ENCODE measurements at regions of chr2 and their contacts with region 1.

Region 1: DNA sequence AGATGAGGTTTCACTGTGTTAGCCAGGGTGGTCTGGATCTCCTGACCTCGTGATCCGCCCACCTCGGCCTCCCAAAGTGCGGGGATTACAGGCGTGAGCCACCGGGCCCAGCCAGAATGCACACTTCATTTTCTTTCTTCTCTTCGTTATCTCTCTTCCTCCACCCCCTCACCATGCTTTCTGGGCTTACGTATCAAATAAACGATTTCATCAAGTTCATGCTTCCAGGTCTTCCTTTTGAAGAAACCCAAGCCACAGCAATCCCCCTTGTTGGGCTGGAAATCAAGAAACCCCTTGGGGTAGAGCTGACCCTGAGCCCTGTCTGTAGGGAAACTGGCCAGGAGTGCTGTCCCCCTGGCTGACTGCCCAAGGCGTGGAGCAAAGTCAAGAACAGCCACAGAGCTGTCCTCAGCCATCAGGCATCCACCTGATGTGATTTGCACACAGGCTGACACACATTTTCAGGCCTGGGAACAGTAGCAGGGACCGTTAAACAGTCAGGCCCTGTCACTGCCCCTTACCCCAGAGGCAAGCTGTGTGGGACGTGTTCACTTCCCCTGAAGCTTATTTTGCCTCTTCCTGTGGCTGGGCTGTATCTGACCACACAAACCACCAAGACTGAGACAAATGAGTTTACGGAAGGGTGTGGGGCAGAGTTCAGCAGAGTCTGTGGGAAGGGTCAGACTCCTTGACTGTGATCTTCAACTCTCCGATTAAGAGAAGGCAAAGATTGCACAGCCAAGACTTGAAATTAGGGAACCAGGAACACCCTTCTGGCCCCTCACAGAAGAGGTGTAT is 15.1 kb upstream of the NMUR1 start:
- DNase-seq: peak; percentile 89
- CTCF ChIP-seq: no peak

Region 2: DNA sequence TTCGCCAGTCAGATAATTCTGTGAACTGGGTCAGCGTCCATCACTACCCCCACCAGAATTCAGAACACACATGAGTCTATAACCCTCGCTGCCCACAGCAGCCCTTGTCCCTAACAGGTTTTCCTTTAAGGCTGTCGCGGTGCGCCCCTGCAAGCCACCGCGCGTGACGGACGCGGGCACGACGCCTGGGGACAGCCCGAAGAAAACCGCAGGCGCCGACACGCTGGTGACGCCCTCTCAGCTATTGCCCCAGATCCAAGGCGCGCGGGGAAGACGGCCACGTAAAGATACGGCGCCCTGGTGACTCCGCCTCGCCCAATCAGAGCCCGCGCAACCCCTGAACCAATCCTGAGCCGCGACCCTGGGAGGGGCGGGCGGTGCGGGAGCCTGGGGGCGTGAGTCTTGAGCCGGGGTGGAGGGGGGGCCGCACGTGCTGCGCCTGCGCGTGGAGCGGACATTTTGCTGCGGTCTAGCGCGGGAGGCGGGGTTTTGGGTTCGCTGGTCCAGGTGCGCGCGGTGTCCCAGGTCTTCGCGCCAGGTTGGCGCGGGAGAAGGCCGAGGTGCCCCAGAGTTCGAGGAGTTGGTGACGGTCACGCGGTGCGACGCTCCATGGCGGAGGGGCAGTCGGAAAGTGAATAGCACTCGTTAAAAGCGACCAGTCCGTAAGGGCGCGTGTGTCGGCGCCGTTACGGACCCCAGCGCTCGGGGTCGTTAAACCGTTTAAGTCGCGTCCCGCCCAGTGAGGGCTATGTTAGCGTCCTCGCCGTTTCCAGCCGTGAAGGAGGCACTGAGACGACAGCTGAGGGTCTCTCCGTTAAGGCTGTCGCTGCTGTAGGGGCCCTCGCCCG is 31.0 kb before region 1 on chr2:
- CTCF ChIA-PET with region 1: interaction called, 15 read pairs
- POLR2A ChIA-PET with region 1: no interaction called
- DNase-seq: peak; percentile 100
- CTCF ChIP-seq: no peak

Region 3: GRCh38 chr2:231530091-231531011 is 15.0 kb before region 1 on chr2 and contains the start of gene NMUR1:
- CTCF ChIA-PET with region 1: interaction called, 18 read pairs
- POLR2A ChIA-PET with region 1: no interaction called
- DNase-seq: peak; percentile 87
- CTCF ChIP-seq: peak; percentile 86

Measured in GM10248 (cell line).